WTC11 (cell line): ENCODE measurements at regions of chr19 and their contacts with region 1.

Region 1: DNA sequence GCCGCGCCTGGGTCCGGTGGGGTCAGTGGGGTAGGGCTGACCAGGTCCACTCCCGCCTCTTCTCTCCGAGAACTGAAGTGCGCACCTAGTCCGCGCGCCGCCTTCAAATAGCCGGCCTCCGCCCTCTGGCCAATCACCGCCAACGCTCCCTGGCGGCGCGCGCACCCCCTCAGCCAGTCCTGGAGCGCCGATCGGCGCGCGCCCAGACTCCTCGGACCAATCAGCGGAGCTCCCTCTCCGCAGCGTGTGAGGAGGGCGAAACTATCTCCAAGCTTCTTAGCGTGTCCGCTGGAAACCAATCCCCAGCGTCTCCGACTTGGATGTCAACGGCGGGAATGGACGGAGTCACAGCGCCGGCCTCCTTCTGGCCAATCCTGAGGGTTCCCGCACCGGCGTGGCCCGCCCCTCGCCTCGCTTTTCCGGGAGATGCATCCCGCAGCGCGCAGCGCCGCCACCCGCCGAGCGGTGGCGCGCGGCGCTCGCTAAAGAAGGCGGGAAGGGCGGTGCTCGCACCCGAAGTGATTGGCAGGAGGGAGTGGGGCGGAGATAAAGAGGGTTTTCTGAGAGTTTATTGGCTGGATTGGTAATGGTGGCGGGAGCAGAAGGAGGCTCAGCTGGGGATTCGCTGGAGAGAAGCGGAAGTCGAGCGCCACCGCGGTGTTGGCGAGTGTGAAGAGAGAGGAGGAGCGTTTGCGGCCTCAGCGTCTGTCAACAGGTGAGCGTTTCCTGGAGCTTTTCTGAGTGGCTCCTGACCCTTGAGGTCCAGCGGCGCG is at the start of gene ASF1B:
- DNase-seq: peak; percentile 98
- ATAC-seq: peak; percentile 90
- H3K4me3 Mint-ChIP-seq: peak within 1 kb of the TSS; percentile 86
- H3K27ac Mint-ChIP-seq: peak within 1 kb of the TSS; percentile 98
- H3K4me1 Mint-ChIP-seq: peaks cover 19% of the 10 kb centered on the region
- H3K27me3 Mint-ChIP-seq: no peaks in the 10 kb centered on the region; the same call in 1 of the 2 replicates
- CTCF ChIP-seq: no peak; the same call in 1 of the 2 replicates
- total RNA-seq, gene ASF1B: 37.1 to 40.4 TPM (median 38.4 TPM) in 3 replicates

Region 2: GRCh38 chr19:13872695-13873389 is 263.9 kb before region 1 on chr19:
- CTCF ChIA-PET with region 1: interaction called, 10 read pairs
- POLR2A ChIA-PET with region 1: no interaction called
- DNase-seq: peak; percentile 89
- ATAC-seq: peak; percentile 97
- H3K4me3 Mint-ChIP-seq: peak overlapping the region; percentile 56
- H3K27ac Mint-ChIP-seq: no peak overlapping the region
- H3K4me1 Mint-ChIP-seq: peaks cover 7% of the 10 kb centered on the region
- H3K27me3 Mint-ChIP-seq: peaks cover 98% of the 10 kb centered on the region
- CTCF ChIP-seq: no peak

Region 3: GRCh38 chr19:14091081-14091812 is 45.4 kb before region 1 on chr19:
- CTCF ChIA-PET with region 1: interaction called, 12 read pairs
- POLR2A ChIA-PET with region 1: interaction called, 3 read pairs
- DNase-seq: peak; percentile 35
- ATAC-seq: peak; percentile 40
- H3K4me3 Mint-ChIP-seq: peak overlapping the region; percentile 95
- H3K27ac Mint-ChIP-seq: peak overlapping the region; percentile 94; the same call in 1 of the 2 replicates
- H3K4me1 Mint-ChIP-seq: peaks cover 13% of the 10 kb centered on the region
- H3K27me3 Mint-ChIP-seq: peaks cover 30% of the 10 kb centered on the region
- CTCF ChIP-seq: no peak

Region 4: DNA sequence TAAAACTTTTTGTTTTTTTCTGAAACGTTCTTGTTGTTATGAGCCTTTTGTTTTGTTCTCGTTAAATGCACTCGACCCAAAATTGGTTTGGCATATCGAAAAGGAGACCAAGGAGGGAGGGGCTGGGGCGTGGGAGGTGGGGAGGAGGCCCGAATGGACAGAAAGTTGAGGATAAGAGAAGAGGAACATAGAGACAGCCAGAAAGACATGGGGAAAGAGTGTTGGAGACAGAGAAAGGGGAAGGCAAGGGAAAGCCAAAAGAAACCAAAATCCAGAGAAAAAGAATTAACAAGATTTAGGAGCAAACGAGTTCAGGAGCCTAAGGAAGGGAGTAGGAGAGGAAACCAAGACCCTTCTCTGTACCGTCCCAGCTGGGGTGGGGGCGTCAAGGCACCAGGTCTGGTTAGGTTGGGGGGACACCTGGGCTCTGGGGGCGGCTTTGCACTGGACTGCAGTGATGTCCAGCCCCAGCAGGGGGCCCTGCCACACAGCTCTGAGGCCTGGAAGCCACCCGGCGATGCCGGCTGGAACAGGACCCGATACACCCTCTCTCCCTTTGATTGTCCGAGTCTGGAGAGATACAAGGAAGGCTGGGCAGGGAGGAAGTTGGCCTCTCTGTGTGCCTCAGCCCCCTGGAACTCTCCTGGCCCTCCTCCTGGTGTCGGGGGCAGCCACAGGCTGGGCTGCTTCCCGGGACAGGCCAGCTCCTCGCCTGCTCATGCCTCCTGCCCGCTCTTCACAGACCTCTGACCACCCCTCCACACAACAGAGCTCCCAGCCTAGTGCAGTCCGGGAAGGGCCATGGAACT is 11.3 kb after region 1 on chr19:
- CTCF ChIA-PET with region 1: interaction called, 52 read pairs
- POLR2A ChIA-PET with region 1: interaction called, 5 read pairs
- DNase-seq: peak; percentile 74
- ATAC-seq: peak; percentile 47
- H3K4me3 Mint-ChIP-seq: no peak overlapping the region
- H3K27ac Mint-ChIP-seq: peak overlapping the region; percentile 70
- H3K4me1 Mint-ChIP-seq: peaks cover 27% of the 10 kb centered on the region
- H3K27me3 Mint-ChIP-seq: no peaks in the 10 kb centered on the region; the same call in 1 of the 2 replicates
- CTCF ChIP-seq: no peak

Region 5: GRCh38 chr19:14366498-14366915 is 229.8 kb after region 1 on chr19:
- CTCF ChIA-PET with region 1: interaction called, 17 read pairs
- POLR2A ChIA-PET with region 1: interaction called, 3 read pairs
- DNase-seq: peak; percentile 89
- ATAC-seq: peak; percentile 65
- H3K4me3 Mint-ChIP-seq: no peak overlapping the region
- H3K27ac Mint-ChIP-seq: no peak overlapping the region
- H3K4me1 Mint-ChIP-seq: peaks cover 24% of the 10 kb centered on the region
- H3K27me3 Mint-ChIP-seq: no peaks in the 10 kb centered on the region; the same call in 1 of the 2 replicates
- CTCF ChIP-seq: no peak

Region 6: GRCh38 chr19:14472202-14472938 is 335.7 kb after region 1 on chr19:
- CTCF ChIA-PET with region 1: interaction called, 26 read pairs
- POLR2A ChIA-PET with region 1: interaction called, 3 read pairs
- DNase-seq: peak; percentile 91
- ATAC-seq: peak; percentile 56
- H3K4me3 Mint-ChIP-seq: peak overlapping the region; percentile 56
- H3K27ac Mint-ChIP-seq: no peak overlapping the region
- H3K4me1 Mint-ChIP-seq: peaks cover 24% of the 10 kb centered on the region
- H3K27me3 Mint-ChIP-seq: peaks cover 12% of the 10 kb centered on the region
- CTCF ChIP-seq: peak; percentile 100